Right ventricle myocardium inferior (tissue), 1 donor: ENCODE measurements at regions of chr12 and their contacts with region 1.

Region 1: DNA sequence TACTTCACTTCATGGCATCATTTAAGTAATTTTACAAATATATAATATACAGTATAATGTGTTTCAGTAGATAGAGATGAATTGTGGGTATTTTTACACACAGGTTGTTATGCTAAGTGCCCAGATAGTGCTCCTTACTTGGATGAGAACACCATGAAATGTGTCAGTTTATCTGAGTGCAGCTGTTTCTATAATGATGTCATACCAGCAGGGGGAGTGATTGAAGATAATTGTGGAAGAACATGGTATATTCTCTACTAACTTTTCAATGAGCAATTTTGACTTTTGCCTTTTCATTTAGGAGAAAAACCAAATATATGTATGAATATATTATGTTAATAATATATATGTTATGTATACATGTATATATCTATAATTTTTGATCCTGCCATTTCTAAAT is 221.6 kb downstream of the LRRK2 start:
- DNase-seq: no peak
- ATAC-seq: no peak

Region 2: GRCh38 chr12:40375076-40375475 is 71.3 kb before region 1 on chr12:
- intact Hi-C with region 1: no loop called
- DNase-seq: no peak
- ATAC-seq: no peak

Region 3: GRCh38 chr12:40431169-40431568 is 15.2 kb before region 1 on chr12:
- intact Hi-C with region 1: loop called (anchors 1 kb)
- DNase-seq: no peak
- ATAC-seq: no peak